A673 (cell line): ENCODE measurements at regions of chr5 and their contacts with region 1.

Region 1: DNA sequence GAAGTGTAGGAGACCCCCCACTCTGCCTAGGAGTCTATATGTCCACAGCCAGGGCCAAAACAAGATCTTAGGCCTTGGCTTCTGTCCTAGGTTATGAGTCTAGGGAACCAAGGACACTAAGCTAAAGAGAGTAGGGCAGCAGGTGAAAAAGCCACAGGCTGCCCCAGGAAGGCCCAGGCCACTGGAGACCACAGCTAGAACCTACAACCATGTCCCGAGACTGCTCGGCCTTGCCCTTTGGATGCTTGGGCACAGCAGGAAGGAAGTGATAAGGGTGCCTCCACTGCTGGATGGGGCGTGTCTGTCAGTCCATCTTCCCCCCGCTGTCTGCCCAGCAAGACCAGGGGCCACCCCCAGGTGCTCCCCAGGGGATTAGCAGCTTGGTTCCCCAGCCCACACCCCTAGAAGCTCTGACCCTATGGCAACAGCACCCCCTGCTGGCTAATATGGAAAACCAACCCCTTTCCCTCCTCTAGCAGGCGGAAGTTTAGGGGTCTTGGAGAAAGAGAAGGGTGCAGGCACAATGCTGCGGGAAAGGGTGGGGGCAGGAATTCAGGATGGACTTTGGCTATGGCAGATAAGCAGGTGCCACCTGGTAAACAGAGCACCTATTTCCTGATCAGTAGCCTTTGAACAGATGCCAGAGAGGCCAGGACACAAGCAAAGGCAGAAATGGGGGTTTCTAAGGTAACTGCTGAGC is 10.5 kb upstream of the IRF1 start:
- DNase-seq: peak; percentile 75
- H3K4me3 ChIP-seq: no peak overlapping the region
- H3K27ac ChIP-seq: no peak overlapping the region
- H3K4me1 ChIP-seq: peaks cover 4% of the 10 kb centered on the region
- H3K27me3 ChIP-seq: no peaks in the 10 kb centered on the region
- CTCF ChIP-seq: peak; percentile 88

Region 2: GRCh38 chr5:132134384-132134783 is 366.7 kb before region 1 on chr5:
- CTCF ChIA-PET with region 1: no interaction called
- POLR2A ChIA-PET with region 1: no interaction called
- intact Hi-C with region 1: no loop called
- DNase-seq: no peak
- H3K4me3 ChIP-seq: no peak overlapping the region
- H3K27ac ChIP-seq: no peak overlapping the region
- H3K4me1 ChIP-seq: no peaks in the 10 kb centered on the region
- H3K27me3 ChIP-seq: peaks cover 32% of the 10 kb centered on the region
- CTCF ChIP-seq: peak; percentile 16; the same call in 1 of the 2 replicates

Region 3: DNA sequence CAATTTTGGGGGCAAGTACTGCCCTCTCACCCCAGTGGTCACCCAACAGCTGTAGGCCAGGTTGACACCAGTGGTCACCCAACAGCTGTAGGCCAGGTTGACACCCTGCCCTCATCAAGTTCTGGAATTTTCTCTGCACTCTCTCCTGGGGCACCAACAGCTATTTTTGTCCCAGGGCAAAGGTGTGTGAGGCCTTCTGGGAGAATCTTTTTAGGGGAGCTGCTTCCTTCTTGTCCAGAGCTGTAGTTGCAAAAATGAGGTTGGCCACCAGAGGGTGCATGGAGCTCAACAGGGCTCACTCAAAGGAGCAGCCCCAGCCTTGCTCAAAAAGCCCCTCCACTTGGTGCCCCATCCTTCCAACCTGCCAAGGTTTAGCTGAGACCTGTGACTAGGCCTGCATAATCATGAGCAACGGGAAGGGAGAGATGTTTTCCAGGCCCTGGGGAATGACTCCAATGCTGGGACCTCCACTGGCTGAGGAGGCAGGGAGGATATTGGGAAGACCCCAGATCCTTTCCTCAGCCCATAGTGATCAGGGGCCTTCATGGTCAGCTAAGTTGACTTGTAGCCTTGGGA is 262.8 kb before region 1 on chr5:
- CTCF ChIA-PET with region 1: interaction called, 11 read pairs
- POLR2A ChIA-PET with region 1: no interaction called
- intact Hi-C with region 1: loop called (anchors 5 kb)
- DNase-seq: peak; percentile 74
- H3K4me3 ChIP-seq: no peak overlapping the region
- H3K27ac ChIP-seq: no peak overlapping the region
- H3K4me1 ChIP-seq: no peaks in the 10 kb centered on the region
- H3K27me3 ChIP-seq: no peaks in the 10 kb centered on the region
- CTCF ChIP-seq: peak; percentile 86

Region 4: GRCh38 chr5:132272311-132273210 is 228.5 kb before region 1 on chr5:
- CTCF ChIA-PET with region 1: interaction called, 6 read pairs
- POLR2A ChIA-PET with region 1: interaction called, 5 read pairs
- intact Hi-C with region 1: loop called (anchors 2 kb)
- DNase-seq: peak; percentile 83
- H3K4me3 ChIP-seq: no peak overlapping the region
- H3K27ac ChIP-seq: no peak overlapping the region
- H3K4me1 ChIP-seq: no peaks in the 10 kb centered on the region
- H3K27me3 ChIP-seq: no peaks in the 10 kb centered on the region
- CTCF ChIP-seq: peak; percentile 87

Region 5: DNA sequence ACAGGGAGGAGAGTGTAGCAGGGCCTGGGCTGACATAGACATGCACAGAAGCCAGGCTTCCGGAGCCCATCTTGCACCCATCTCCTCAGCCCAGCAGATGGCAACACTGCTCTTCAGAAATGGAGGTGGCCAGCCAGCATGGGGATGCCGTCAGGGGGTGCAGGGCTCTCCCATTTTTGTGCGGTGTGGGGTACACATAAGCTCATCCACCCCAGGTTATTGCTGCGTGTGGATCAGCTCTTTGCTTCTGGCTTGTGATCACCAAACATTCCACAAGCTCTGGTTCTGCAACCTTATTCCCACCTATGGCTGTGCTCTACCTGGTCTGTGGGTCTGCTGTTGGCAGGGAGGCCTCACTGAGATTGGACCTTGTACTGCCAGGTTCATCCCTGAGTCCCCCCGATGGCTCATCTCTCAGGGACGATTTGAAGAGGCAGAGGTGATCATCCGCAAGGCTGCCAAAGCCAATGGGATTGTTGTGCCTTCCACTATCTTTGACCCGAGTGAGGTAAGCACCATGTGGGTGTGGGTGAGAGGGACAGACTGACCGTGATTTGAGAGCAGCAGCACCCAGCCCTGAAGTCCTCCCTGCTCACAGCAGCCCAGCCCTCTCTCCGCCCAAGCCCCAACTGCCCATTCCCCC is 114.3 kb before region 1 on chr5:
- CTCF ChIA-PET with region 1: interaction called, 9 read pairs
- POLR2A ChIA-PET with region 1: no interaction called
- intact Hi-C with region 1: loop called (anchors 1 kb)
- DNase-seq: peak; percentile 72
- H3K4me3 ChIP-seq: no peak overlapping the region
- H3K27ac ChIP-seq: no peak overlapping the region
- H3K4me1 ChIP-seq: no peaks in the 10 kb centered on the region
- H3K27me3 ChIP-seq: no peaks in the 10 kb centered on the region
- CTCF ChIP-seq: peak; percentile 83

Region 6: DNA sequence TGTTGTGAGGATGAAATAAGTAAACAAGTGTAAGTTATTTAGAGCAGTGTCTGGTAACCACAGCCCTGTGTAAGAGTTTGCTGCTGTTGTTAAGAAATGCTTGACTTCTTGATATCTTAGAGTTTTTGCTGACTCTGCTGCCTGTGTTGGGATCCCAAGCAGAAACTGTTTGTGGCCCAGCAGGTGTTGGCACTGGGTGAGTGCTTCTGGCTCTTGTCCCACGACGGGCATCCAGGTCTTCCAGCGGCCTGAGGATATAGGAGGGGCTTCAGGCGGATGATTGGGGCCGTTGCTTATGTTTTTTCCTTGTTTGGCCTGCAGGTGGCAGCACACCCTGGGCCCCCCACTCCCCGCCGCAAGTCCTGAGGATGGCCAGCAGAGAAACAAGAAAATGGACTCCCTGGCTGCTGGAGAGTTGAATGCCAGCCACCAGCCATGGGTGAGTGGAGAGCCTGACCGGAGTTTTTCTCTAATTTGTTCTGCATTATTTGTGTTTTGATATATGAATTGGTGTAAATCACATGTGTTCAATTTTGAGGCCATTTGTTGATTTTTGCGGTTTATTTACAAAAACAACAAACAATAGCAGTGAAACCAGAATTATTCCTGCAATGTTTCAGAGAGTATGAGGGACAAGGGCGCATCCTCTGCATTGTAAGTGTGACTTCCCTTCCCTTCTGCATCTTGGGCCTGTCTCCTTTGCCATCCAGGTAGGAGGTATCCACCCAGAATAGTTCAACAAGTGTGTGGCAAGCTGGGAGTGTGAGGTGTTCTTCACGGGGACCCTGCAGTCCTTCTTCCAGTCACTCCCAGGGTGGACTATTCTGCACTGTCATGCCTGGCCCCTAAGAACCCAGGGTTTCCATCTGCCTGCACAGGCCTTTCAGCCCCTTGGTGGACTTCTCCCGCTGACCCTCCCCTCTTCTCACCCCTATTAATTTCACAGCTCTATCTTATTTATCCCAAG is 81.3 kb before region 1 on chr5:
- CTCF ChIA-PET with region 1: interaction called, 3 read pairs
- POLR2A ChIA-PET with region 1: no interaction called
- intact Hi-C with region 1: loop called (anchors 2 kb)
- DNase-seq: peak; percentile 82
- H3K4me3 ChIP-seq: no peak overlapping the region
- H3K27ac ChIP-seq: no peak overlapping the region
- H3K4me1 ChIP-seq: peaks cover 38% of the 10 kb centered on the region
- H3K27me3 ChIP-seq: no peaks in the 10 kb centered on the region
- CTCF ChIP-seq: peak; percentile 88